ENCODE measurements at regions of chrX and their contacts with region 1.

Region 1: DNA sequence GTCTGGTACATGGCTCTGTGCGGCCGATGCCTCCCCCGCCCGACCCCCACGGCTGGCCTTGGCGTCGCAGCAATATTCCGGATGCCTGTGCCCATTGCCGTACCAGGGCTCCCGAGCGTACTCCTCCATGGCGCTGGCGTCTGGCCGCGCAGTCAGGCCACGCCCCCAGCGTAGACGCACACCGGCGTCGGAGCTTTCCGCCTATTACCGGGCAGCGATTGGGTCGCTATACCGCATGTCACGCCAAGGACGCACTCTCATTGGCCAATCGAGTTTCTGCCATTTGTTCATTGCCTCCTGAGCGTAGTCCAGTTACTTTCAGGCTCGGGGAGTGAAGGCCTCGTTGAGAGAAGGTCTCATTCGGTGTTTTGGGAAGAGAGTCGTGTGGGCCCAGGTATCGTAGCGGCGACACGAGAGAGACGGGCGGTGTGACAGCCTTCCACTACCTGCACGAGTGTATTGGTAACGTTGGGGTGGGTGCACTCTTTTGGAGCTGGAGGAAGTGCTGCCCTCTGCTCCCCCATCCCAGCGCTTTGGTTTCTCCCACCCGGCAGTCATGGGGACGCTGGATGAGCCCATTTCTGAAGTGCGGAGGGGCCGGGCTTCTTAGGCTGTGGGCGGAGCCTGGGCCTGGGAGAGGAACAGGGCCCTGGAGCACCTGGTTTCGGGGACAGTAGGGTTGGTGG is at the starts of genes PQBP1 and TIMM17B:
- DNase-seq: peak; percentile 78 to 96 (median 86)
- ATAC-seq: peak; percentile 93
- H3K4me3 ChIP-seq: peak within 1 kb of the TSS; percentile 72
- H3K27ac ChIP-seq: peak within 1 kb of the TSS; percentile 97
- H3K4me1 ChIP-seq: peaks cover 11 to 20% of the 10 kb centered on the region in 2 experiments; a peak in 4 of 5 replicates
- H3K27me3 ChIP-seq: no peaks in the 10 kb centered on the region
- CTCF ChIP-seq: no peak
- EP300 ChIP-seq: no peak
- POLR2A ChIP-seq: peak; percentile 97
- RAD21 ChIP-seq: no peak
- polyA plus RNA-seq, gene PQBP1: 41.3 to 77.0 TPM
- polyA plus RNA-seq, gene TIMM17B: 9.9 to 69.0 TPM

Region 2: GRCh38 chrX:48648336-48648751 is 249.4 kb before region 1 on chrX:
- CTCF ChIA-PET with region 1: no interaction called
- POLR2A ChIA-PET with region 1: no interaction called
- in situ Hi-C with region 1: no loop called
- intact Hi-C with region 1: loop called (anchors 5 kb)
- DNase-seq: peak in 2 of 4 experiments; percentile 12 to 48
- ATAC-seq: peak; percentile 77
- H3K4me3 ChIP-seq: no peak overlapping the region
- H3K27ac ChIP-seq: no peak overlapping the region
- H3K4me1 ChIP-seq: no peaks in the 10 kb centered on the region; a peak in 2 of 5 replicates
- H3K27me3 ChIP-seq: no peaks in the 10 kb centered on the region
- CTCF ChIP-seq: peak; percentile 19 to 57 (median 31); a peak in 3 of 6 replicates
- EP300 ChIP-seq: no peak
- POLR2A ChIP-seq: no peak
- RAD21 ChIP-seq: peak; percentile 26 to 63; a peak in 3 of 4 replicates

Region 3: GRCh38 chrX:48761674-48762471 is 135.9 kb before region 1 on chrX and contains the start of gene GLOD5:
- CTCF ChIA-PET with region 1: no interaction called
- POLR2A ChIA-PET with region 1: no interaction called
- in situ Hi-C with region 1: no loop called
- intact Hi-C with region 1: loop called (anchors 5 kb)
- DNase-seq: peak; percentile 46 to 75 (median 56)
- ATAC-seq: peak; percentile 97
- H3K4me3 ChIP-seq: no peak within 1 kb of the TSS
- H3K27ac ChIP-seq: peak within 1 kb of the TSS; percentile 33; the same call in 1 of the 3 replicates
- H3K4me1 ChIP-seq: peaks cover 16 to 19% of the 10 kb centered on the region in 2 experiments
- H3K27me3 ChIP-seq: no peaks in the 10 kb centered on the region
- CTCF ChIP-seq: peak; percentile 61 to 66 (median 61)
- EP300 ChIP-seq: no peak
- POLR2A ChIP-seq: no peak
- RAD21 ChIP-seq: peak; percentile 11 to 80; a peak in 2 of 4 replicates
- polyA plus RNA-seq, gene GLOD5: 3.8 to 4.4 TPM

Region 4: DNA sequence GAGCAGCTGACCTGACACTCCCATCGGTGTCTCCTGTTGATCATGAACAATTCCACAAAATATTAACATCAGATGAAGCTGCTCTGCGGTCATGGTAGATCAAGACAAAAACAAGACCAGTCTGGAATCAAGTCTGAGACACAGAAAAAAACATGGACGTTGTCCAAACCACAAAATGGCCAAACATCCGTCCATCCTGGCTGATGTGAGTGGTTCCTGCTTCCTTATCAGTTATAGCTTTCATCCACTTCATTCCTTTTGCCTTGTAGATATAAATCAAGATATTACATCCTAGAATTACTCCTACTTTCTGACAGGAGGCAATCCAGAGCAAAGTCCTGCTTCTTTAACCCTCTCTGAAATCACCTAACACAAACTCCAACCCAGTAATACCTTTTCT is 33.6 kb before region 1 on chrX:
- CTCF ChIA-PET with region 1: no interaction called
- POLR2A ChIA-PET with region 1: no interaction called
- in situ Hi-C with region 1: no loop called
- intact Hi-C with region 1: loop called (anchors 5 kb)
- DNase-seq: peak in 3 of 4 experiments; percentile 8 to 57 (median 39)
- ATAC-seq: peak; percentile 77
- H3K4me3 ChIP-seq: no peak overlapping the region
- H3K27ac ChIP-seq: no peak overlapping the region
- H3K4me1 ChIP-seq: peaks cover 2 to 13% of the 10 kb centered on the region in 2 experiments; a peak in 4 of 5 replicates
- H3K27me3 ChIP-seq: no peaks in the 10 kb centered on the region
- CTCF ChIP-seq: no peak
- EP300 ChIP-seq: peak; percentile 67; the same call in 1 of the 2 replicates
- POLR2A ChIP-seq: no peak
- RAD21 ChIP-seq: peak in 1 of 2 experiments; percentile 19; a peak in 1 of 4 replicates

Region 5: DNA sequence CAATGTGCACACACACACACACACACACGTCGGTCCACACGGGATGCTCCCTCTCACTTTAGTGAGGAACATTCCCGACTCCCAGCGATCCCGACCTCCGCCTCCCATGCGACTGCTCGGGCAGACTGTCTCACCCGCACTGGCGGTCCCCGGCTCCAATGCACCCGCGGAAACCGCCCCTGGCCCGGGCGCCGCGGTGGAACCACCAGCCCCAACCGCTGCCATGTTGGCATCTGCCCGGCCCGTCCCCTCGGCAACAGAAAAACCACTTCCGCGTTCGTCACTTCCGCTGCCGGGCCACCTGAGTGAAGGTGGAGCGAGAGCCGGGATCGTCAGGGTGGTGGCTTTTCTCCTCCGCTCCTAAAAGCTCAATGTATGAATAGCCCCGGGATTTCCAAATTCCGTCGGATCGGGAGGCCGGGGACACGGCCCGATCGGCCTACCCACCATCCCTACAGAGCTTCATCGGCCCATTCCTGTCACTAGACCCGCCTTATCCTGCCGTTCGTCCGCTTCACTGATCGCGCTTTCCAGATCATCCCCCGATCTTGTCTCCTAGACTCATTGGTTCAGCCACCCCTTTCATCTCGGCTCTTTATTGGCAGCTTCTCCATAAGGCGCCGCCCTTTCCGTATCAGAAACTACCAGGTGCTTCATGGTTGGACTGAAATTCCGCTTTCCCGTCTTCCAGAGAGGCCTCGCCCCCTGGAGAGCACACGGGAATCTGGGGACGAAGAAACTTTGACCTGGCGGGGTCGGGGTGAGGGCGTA is 13.8 kb after region 1 on chrX and contains the start of gene SLC35A2:
- CTCF ChIA-PET with region 1: no interaction called
- POLR2A ChIA-PET with region 1: interaction called, 13 read pairs
- in situ Hi-C with region 1: no loop called
- intact Hi-C with region 1: no loop called
- DNase-seq: peak; percentile 70 to 88 (median 76)
- ATAC-seq: peak; percentile 91
- H3K4me3 ChIP-seq: peak within 1 kb of the TSS; percentile 92
- H3K27ac ChIP-seq: peak within 1 kb of the TSS; percentile 89
- H3K4me1 ChIP-seq: peaks cover 30 to 34% of the 10 kb centered on the region in 2 experiments
- H3K27me3 ChIP-seq: no peaks in the 10 kb centered on the region
- CTCF ChIP-seq: no peak
- EP300 ChIP-seq: 0 out of 2 replicates have a peak, but pooled peaks have one; percentile 0
- POLR2A ChIP-seq: peak; percentile 85
- RAD21 ChIP-seq: 0 out of 4 replicates have a peak, but pooled peaks of 1 of the 2 experiments have one; percentile 12
- polyA plus RNA-seq, gene SLC35A2: 3.3 to 5.2 TPM

Region 6: DNA sequence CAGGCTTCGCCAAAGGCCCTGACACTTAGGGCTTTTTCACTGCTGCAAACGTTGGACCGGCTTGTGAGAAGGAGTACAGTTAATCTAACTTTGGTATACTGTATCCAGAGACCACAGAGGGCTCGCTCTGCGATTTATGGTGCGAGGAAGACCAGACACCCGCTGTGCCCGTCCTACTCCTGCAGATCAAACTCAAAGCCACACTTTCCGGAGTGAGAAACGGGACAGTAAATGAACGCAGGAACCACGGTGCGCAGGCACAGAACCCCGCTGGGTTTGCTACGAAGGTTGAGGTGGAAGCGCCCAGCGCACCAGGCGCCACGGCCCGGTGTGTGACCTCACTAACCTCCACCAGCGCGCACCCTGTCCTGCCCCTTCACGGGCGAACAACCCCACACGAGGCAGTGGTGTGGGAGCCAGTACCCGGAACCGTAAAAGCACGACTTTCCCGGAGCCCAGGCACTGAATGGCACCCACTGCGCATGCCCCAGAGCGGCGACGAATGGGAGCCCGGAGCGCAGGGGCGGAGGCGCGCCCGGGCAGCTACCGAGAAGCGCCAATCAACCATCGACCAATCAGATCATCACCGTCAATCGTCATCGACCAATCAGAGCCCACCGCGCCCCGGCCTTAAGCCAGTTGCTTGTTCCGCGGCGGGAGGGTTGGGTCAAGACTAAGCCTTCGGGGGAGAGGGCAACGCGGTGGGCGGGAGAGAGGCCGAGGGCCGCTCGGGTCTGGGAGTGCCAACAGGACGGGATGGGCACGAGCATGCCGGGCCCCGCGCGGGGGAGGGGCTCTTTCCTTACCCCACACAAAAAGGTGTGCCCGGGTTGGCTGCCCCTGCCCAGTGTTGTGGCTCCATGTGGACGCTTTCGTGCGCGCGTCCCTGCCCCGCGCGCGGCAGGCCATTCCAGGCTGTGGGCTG is 203.2 kb after region 1 on chrX:
- CTCF ChIA-PET with region 1: no interaction called
- POLR2A ChIA-PET with region 1: no interaction called
- in situ Hi-C with region 1: no loop called
- intact Hi-C with region 1: loop called (anchors 5 kb)
- DNase-seq: peak; percentile 97 to 99 (median 98)
- ATAC-seq: peak; percentile 94
- H3K4me3 ChIP-seq: peak overlapping the region; percentile 58
- H3K27ac ChIP-seq: peak overlapping the region; percentile 97
- H3K4me1 ChIP-seq: peaks cover 6 to 14% of the 10 kb centered on the region in 2 experiments; a peak in 4 of 5 replicates
- H3K27me3 ChIP-seq: no peaks in the 10 kb centered on the region
- CTCF ChIP-seq: no peak
- EP300 ChIP-seq: no peak
- POLR2A ChIP-seq: peak; percentile 89
- RAD21 ChIP-seq: no peak

Measured in K562 (cell line).